Spleen (tissue), 13 donors: ENCODE measurements at regions of chr3 and their contacts with region 1.

Region 1: DNA sequence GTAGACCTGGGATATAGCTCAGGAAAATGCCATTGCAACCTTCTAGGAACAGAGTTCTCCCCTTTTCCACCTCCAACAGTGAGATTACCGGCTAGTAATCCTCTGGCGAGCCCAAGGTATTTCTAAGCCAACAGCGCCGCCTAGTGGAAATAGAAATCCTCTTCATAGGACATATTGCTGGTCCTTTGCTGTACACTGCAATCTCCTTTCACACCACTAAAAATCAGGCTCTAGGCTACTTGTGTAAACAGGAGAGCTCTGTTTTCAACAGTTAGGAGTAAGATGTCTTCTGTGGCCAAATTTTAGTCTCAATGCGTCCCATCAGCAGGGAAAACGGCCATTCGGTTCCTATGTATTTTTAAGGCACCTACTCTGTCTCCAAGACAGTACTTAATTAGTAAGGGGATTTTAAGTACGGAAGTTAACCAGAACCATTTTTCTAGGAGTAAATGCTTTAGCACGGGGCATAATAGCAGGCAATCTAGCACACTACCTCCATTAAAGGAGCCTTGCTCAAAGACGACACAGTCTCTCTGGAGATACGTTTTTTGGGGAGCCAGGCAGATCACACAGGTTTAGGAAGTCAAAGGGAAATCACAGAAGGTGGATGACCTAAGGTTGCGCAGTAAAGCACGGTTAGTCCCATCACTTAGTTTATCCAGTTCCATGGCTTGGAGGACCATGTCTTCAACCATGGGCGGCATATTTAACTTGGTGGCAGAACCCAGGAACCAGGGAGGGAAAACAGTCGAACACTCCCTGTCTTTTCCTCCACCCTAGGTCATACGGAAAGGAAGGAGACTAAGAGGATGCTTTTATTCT is 43.8 kb downstream of the NCEH1 start:
- DNase-seq: no peak
- H3K4me3 ChIP-seq: peak overlapping the region in 3 of 8 donors; percentile 1 to 32 (median 24)
- H3K27ac ChIP-seq: peak overlapping the region in 2 of 8 donors; percentile 31 to 38
- H3K4me1 ChIP-seq: peaks cover 0 to 17% (median 9%) of the 10 kb centered on the region in 6 donors
- H3K27me3 ChIP-seq: no peaks in the 10 kb centered on the region
- CTCF ChIP-seq: peak; percentile 62 to 91 (median 86)
- POLR2A ChIP-seq: no peak

Region 2: DNA sequence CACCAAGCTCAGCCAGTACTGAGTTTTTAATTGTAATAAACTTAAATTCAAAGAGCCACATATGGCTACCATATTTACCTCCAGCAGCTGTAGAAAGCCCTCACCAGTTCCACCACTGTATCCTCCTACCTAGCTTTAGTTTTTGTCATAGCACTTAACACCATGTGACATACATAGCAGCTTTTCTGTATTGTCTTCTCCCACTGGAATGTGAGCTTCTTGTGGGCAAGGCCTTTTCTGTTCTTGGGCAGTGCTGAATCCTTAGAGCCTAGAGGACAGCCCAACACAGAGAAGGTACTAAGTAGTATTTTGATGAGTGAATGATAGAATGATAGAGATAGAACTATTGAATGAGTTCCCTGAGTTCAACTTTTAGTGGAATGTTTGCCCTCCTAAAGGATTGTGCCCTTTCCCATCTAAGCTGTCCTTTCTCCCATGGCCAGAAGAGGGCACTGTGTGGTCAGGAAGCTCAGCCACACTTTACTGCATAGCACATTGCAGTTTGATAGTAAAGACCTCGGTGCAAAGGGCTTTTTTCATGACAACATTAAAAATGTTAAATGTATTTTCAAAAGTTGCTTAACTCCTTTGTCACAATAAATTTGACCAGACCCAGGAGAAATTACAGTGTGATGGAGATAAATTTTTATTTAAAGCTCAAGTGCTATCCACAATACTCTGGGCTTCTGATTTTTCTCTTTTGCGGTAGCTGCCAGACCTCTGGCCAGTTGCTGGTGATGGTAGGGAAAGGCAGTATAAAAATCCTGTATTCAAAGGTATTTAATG is 334.6 kb before region 1 on chr3:
- intact Hi-C with region 1: loop called (anchors 5 kb)
- DNase-seq: no peak
- H3K4me3 ChIP-seq: no peak overlapping the region
- H3K27ac ChIP-seq: peak overlapping the region in 3 of 8 donors; percentile 22 to 36 (median 24)
- H3K4me1 ChIP-seq: peaks cover 0 to 8% (median 4%) of the 10 kb centered on the region in 6 donors
- H3K27me3 ChIP-seq: no peaks in the 10 kb centered on the region
- CTCF ChIP-seq: peak; percentile 71 to 92 (median 89)
- POLR2A ChIP-seq: no peak

Region 3: GRCh38 chr3:172476347-172476746 is 190.7 kb before region 1 on chr3:
- intact Hi-C with region 1: loop called (anchors 10 kb)
- DNase-seq: no peak
- H3K4me3 ChIP-seq: peak overlapping the region in 4 of 8 donors; percentile 20 to 66 (median 37)
- H3K27ac ChIP-seq: peak overlapping the region in 4 of 8 donors; percentile 62 to 79 (median 73)
- H3K4me1 ChIP-seq: peaks cover 0 to 20% (median 13%) of the 10 kb centered on the region in 6 donors
- H3K27me3 ChIP-seq: no peaks in the 10 kb centered on the region
- CTCF ChIP-seq: no peak
- POLR2A ChIP-seq: no peak